ENCODE measurements at regions of chr7 and their contacts with region 1.

Region 1: DNA sequence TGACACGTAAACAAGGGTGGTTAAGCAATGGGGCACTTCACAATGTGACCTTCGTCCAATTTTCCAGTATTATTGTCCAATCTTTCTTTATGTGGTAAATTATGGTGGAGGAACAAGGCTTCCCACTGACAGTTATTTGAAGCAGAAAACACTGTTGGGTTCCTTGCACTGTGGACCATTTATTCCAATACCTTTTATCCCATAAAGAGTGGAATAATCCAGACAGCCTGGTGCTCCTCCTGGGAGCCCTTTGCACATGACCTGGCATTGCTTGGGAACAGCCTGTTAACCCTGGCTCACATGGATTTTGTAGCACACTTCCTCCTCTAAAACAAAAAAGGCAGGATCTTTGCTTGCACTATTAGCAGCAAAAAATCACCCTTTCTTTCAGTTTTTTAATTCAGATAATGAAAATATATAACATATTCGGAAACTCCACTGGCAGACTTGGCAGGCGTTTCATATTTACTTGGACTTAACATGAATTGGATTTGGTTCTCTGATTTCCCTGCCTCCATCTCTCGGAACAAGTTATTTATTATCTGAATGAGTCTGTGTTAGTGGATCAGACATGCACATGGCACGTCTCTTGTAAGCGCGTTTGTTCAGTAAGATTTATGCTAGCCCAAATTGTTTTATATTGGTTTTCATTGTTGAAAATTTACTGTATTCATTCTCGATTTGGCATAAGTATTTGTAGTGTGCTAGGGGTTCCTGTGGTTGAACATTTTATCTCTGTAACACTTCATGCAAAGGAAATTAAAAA is 59.3 kb downstream of the BMPER start:
- DNase-seq: peak in 1 of 2 donors; percentile 31
- ATAC-seq: peak in 1 of 2 donors; percentile 40
- H3K4me3 ChIP-seq: no peak overlapping the region
- H3K27ac ChIP-seq: peak overlapping the region in 3 of 4 donors; percentile 11 to 21 (median 16)
- H3K4me1 ChIP-seq: peaks cover 15 to 19% of the 10 kb centered on the region in 2 donors
- H3K27me3 ChIP-seq: no peaks in the 10 kb centered on the region
- CTCF ChIP-seq: no peak
- POLR2A ChIP-seq: no peak

Region 2: DNA sequence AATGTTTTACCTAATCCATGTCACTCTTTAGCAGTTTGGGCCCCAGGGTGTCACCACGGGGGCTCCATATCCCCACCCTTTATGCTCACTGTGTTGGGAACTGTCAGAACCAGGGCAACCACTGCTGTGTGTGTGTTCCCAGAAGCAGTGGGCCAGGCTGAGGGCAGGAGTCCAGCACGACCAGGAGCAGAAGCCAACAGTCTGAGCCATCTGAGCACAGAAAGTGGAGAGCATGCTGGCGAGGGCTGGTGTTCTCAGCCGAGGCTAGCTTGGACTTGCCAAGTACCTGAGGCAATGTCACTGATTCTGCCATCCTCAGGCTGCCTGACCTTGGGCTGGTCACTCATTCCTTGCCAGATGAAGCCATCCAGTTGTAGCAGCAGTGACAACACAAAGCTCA is 225.7 kb after region 1 on chr7:
- in situ Hi-C with region 1: no loop called
- intact Hi-C with region 1: loop called (anchors 10 kb)
- DNase-seq: peak; percentile 92 to 93
- ATAC-seq: peak; percentile 97 to 98
- H3K4me3 ChIP-seq: no peak overlapping the region
- H3K27ac ChIP-seq: peak overlapping the region; percentile 66 to 89 (median 79)
- H3K4me1 ChIP-seq: peaks cover 8 to 24% of the 10 kb centered on the region in 2 donors
- H3K27me3 ChIP-seq: no peaks in the 10 kb centered on the region
- CTCF ChIP-seq: no peak
- POLR2A ChIP-seq: no peak